Spleen (tissue), 13 donors: ENCODE measurements at regions of chr14 and their contacts with region 1.

Region 1: DNA sequence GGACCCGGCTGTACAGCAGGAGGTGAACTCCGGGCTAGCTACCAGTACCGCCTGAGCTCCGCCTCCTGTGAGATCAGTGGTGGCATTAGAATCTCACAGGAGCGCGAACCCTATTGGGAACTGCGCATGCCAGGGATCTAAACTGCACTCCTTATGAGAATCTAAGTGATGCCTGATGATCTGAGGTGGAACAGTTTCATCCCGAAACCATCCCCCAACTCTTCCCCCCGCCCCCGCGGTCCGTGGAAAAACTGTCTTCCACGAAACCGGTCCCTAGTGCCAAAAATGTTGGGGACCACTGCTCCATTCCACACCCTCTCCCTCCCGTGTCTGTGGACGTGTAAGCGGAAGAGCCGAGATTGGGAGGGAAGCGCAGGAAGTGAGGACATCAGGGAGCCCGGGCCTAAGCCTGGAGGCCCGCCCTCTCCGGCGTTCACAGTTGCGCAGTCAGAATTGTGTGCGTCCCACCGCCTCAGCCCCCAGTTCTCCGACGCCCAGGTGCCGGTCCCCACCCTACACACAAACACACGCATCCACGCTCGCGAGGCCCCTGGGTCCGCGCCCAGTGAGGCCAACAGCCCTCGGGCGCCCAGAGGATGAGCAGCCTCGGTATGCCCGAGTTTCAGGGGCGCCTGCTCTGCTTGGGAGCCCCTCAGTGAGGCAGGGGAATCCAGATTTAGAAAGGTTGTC is 1.8 kb upstream of the RNASE4 start:
- DNase-seq: peak; percentile 94
- H3K4me3 ChIP-seq: peak overlapping the region; percentile 44 to 88 (median 72)
- H3K27ac ChIP-seq: peak overlapping the region; percentile 94 to 100 (median 98)
- H3K4me1 ChIP-seq: peaks cover 12 to 61% (median 52%) of the 10 kb centered on the region in 6 donors
- H3K27me3 ChIP-seq: no peaks in the 10 kb centered on the region
- CTCF ChIP-seq: peak in 2 of 11 experiments; percentile 11 to 13
- POLR2A ChIP-seq: peak in 2 of 3 donors; percentile 78 to 84

Region 2: GRCh38 chr14:20469890-20470602 is 212.5 kb before region 1 on chr14:
- intact Hi-C with region 1: loop called (anchors 10 kb)
- DNase-seq: peak; percentile 81
- H3K4me3 ChIP-seq: peak overlapping the region; percentile 69 to 94 (median 87)
- H3K27ac ChIP-seq: peak overlapping the region; percentile 86 to 95 (median 91)
- H3K4me1 ChIP-seq: peaks cover 14 to 60% (median 41%) of the 10 kb centered on the region in 6 donors
- H3K27me3 ChIP-seq: no peaks in the 10 kb centered on the region
- CTCF ChIP-seq: no peak
- POLR2A ChIP-seq: peak in 1 of 3 donors; percentile 47

Region 3: GRCh38 chr14:20624495-20625070 is 58.0 kb before region 1 on chr14:
- intact Hi-C with region 1: loop called (anchors 5 kb)
- DNase-seq: peak; percentile 91
- H3K4me3 ChIP-seq: peak overlapping the region in 7 of 8 donors; percentile 6 to 55 (median 25)
- H3K27ac ChIP-seq: peak overlapping the region in 5 of 8 donors; percentile 7 to 49 (median 26)
- H3K4me1 ChIP-seq: peaks cover 2 to 71% (median 42%) of the 10 kb centered on the region in 6 donors
- H3K27me3 ChIP-seq: peaks cover 0 to 51% (median 4%) of the 10 kb centered on the region in 7 donors
- CTCF ChIP-seq: no peak
- POLR2A ChIP-seq: no peak

Region 4: DNA sequence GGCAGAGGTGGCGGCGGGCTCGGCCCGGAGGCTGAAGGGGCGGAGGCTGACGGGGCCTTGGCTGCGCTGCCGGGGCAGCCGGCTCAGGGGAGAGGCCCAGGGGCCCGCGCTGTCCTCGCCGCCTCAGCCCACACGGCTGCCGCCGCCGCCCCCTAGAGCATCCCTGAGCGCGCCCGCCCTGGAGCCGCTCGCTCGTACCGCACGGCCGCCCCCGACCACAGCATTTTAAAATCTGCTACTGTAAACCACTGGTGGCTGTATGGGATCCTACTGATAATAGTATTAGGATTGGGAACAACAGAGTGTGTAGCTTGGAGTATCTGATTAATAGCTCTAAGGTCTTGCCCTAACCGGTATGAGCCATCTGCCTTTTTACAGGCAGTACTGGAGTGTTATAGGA is 40.9 kb after region 1 on chr14:
- intact Hi-C with region 1: no loop called
- DNase-seq: peak; percentile 80
- H3K4me3 ChIP-seq: peak overlapping the region in 1 of 8 donors; percentile 40
- H3K27ac ChIP-seq: peak overlapping the region in 2 of 8 donors; percentile 16 to 21
- H3K4me1 ChIP-seq: peaks cover 0 to 28% (median 2%) of the 10 kb centered on the region in 6 donors
- H3K27me3 ChIP-seq: peaks cover 0 to 27% (median 7%) of the 10 kb centered on the region in 7 donors
- CTCF ChIP-seq: no peak
- POLR2A ChIP-seq: no peak